ENCODE measurements at regions of chr5 and their contacts with region 1.

Region 1: DNA sequence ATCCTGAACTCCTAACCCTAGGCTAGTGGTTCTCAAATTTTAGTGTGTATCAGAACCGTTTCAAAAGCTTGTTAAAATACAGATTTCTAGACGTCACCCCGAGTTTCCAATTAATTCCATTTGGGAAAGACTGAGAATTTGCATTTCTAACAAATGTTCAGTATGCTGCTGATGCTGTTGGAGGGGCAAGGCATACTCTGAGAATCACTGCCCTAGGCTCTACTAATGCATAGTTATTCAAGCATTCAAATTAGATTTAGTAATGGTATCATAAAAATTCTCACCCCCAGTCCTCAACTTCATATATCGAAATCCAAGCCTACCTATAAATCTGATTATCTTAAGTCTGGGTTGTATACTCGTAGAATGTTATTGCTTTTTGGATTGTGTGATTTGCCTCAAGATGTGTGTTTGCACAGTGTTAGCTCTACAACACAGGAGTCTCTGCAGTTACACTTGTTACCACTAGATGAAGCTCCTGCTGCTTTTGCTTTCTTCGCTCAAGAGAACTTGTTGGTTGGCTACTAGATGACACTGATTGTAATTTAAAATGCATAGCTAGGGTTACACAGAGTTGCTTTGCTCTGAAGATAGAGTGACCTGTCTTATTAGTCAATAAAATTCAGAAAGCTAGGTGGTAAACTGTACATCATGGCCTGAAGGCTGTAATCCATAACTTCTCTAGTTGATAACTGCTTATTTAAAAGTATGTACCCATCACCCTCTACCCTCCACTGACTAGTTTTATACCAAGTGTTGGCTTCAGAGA is 7.5 kb upstream of the ERAP2 start:
- DNase-seq: no peak
- ATAC-seq: peak; percentile 86
- H3K4me3 ChIP-seq: no peak overlapping the region
- H3K27ac ChIP-seq: no peak overlapping the region
- H3K4me1 ChIP-seq: peaks cover 28% of the 10 kb centered on the region
- H3K27me3 ChIP-seq: no peaks in the 10 kb centered on the region
- CTCF ChIP-seq: peak; percentile 99 to 100 (median 100); a peak in 5 of 6 replicates
- EP300 ChIP-seq: no peak
- POLR2A ChIP-seq: no peak
- RAD21 ChIP-seq: peak; percentile 100

Region 2: DNA sequence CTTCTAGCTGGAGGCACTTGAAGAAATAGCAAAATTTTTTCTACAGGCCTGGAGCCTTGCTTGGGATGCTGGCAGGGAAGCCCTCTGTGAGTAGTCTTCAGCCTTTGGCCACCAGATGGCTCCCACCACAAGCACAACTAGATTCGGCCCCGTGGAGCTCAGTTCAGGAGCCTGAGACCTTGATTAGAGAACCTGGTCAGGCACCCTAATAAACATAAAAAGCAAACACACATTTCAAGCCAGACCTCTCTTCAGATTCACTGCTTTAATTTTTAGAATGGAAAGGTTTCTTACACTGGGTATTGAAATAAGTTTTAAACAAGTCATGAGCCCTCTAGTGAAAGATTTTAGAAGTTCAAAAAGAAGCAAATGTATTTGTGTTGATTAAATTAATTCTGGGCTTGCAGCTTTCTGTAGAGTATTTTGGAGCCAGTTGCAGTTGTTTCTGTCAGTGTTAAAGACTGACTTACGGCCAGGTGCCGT is 1087.6 kb before region 1 on chr5:
- CTCF ChIA-PET with region 1: no interaction called
- POLR2A ChIA-PET with region 1: no interaction called
- RAD21 ChIA-PET with region 1: no interaction called
- SMC1A ChIA-PET with region 1: no interaction called
- in situ Hi-C with region 1: no loop called
- intact Hi-C with region 1: no loop called
- DNase-seq: peak; percentile 51
- ATAC-seq: peak; percentile 100
- H3K4me3 ChIP-seq: no peak overlapping the region
- H3K27ac ChIP-seq: no peak overlapping the region
- H3K4me1 ChIP-seq: no peaks in the 10 kb centered on the region
- H3K27me3 ChIP-seq: no peaks in the 10 kb centered on the region
- CTCF ChIP-seq: peak; percentile 84 to 86 (median 86)
- EP300 ChIP-seq: no peak
- POLR2A ChIP-seq: no peak
- RAD21 ChIP-seq: peak; percentile 95

Region 3: GRCh38 chr5:96816411-96816939 is 52.3 kb before region 1 on chr5:
- CTCF ChIA-PET with region 1: interaction called, 14 read pairs
- POLR2A ChIA-PET with region 1: interaction called, 4 read pairs
- RAD21 ChIA-PET with region 1: interaction called, 5 read pairs
- SMC1A ChIA-PET with region 1: interaction called, 17 read pairs
- in situ Hi-C with region 1: no loop called
- intact Hi-C with region 1: no loop called
- DNase-seq: peak; percentile 90
- ATAC-seq: peak; percentile 89
- H3K4me3 ChIP-seq: peak overlapping the region; percentile 53
- H3K27ac ChIP-seq: peak overlapping the region; percentile 82
- H3K4me1 ChIP-seq: peaks cover 15% of the 10 kb centered on the region
- H3K27me3 ChIP-seq: no peaks in the 10 kb centered on the region
- CTCF ChIP-seq: no peak
- EP300 ChIP-seq: no peak
- POLR2A ChIP-seq: no peak
- RAD21 ChIP-seq: no peak

Region 4: GRCh38 chr5:96904054-96904931 is 35.5 kb after region 1 on chr5:
- CTCF ChIA-PET with region 1: interaction called, 167 read pairs
- POLR2A ChIA-PET with region 1: interaction called, 3 read pairs
- RAD21 ChIA-PET with region 1: interaction called, 134 read pairs
- SMC1A ChIA-PET with region 1: interaction called, 62 read pairs
- in situ Hi-C with region 1: no loop called
- intact Hi-C with region 1: loop called (anchors 1 kb)
- DNase-seq: no peak
- ATAC-seq: peak; percentile 34; the same call in 2 of the 3 replicates
- H3K4me3 ChIP-seq: no peak overlapping the region
- H3K27ac ChIP-seq: no peak overlapping the region
- H3K4me1 ChIP-seq: peaks cover 3% of the 10 kb centered on the region; the same call in 1 of the 2 replicates
- H3K27me3 ChIP-seq: no peaks in the 10 kb centered on the region
- CTCF ChIP-seq: no peak
- EP300 ChIP-seq: no peak
- POLR2A ChIP-seq: no peak
- RAD21 ChIP-seq: no peak

Region 5: GRCh38 chr5:96963267-96963666 is 94.5 kb after region 1 on chr5:
- CTCF ChIA-PET with region 1: interaction called, 25 read pairs
- POLR2A ChIA-PET with region 1: interaction called, 8 read pairs
- RAD21 ChIA-PET with region 1: interaction called, 136 read pairs
- SMC1A ChIA-PET with region 1: interaction called, 74 read pairs
- in situ Hi-C with region 1: no loop called
- intact Hi-C with region 1: no loop called
- DNase-seq: peak; percentile 33
- ATAC-seq: peak; percentile 74
- H3K4me3 ChIP-seq: peak overlapping the region; percentile 52; the same call in 1 of the 2 replicates
- H3K27ac ChIP-seq: peak overlapping the region; percentile 27
- H3K4me1 ChIP-seq: peaks cover 12% of the 10 kb centered on the region
- H3K27me3 ChIP-seq: no peaks in the 10 kb centered on the region
- CTCF ChIP-seq: no peak
- EP300 ChIP-seq: no peak
- POLR2A ChIP-seq: no peak
- RAD21 ChIP-seq: no peak

Region 6: GRCh38 chr5:96997265-96997859 is 128.6 kb after region 1 on chr5:
- CTCF ChIA-PET with region 1: interaction called, 109 read pairs
- POLR2A ChIA-PET with region 1: no interaction called
- RAD21 ChIA-PET with region 1: interaction called, 52 read pairs
- SMC1A ChIA-PET with region 1: interaction called, 104 read pairs
- in situ Hi-C with region 1: no loop called
- intact Hi-C with region 1: loop called (anchors 2 kb)
- DNase-seq: no peak
- ATAC-seq: peak; percentile 92
- H3K4me3 ChIP-seq: no peak overlapping the region
- H3K27ac ChIP-seq: no peak overlapping the region
- H3K4me1 ChIP-seq: no peaks in the 10 kb centered on the region
- H3K27me3 ChIP-seq: no peaks in the 10 kb centered on the region
- CTCF ChIP-seq: peak; percentile 24 to 40 (median 40); a peak in 4 of 6 replicates
- EP300 ChIP-seq: no peak
- POLR2A ChIP-seq: no peak
- RAD21 ChIP-seq: peak; percentile 47

Region 7: GRCh38 chr5:97044052-97044451 is 175.3 kb after region 1 on chr5:
- CTCF ChIA-PET with region 1: interaction called, 88 read pairs
- POLR2A ChIA-PET with region 1: no interaction called
- RAD21 ChIA-PET with region 1: interaction called, 15 read pairs
- SMC1A ChIA-PET with region 1: interaction called, 49 read pairs
- in situ Hi-C with region 1: no loop called
- intact Hi-C with region 1: no loop called
- DNase-seq: no peak
- ATAC-seq: peak; percentile 33
- H3K4me3 ChIP-seq: no peak overlapping the region
- H3K27ac ChIP-seq: no peak overlapping the region
- H3K4me1 ChIP-seq: no peaks in the 10 kb centered on the region
- H3K27me3 ChIP-seq: no peaks in the 10 kb centered on the region; a peak in 1 of 4 replicates
- CTCF ChIP-seq: peak in 2 of 3 experiments; percentile 18; a peak in 2 of 6 replicates
- EP300 ChIP-seq: no peak
- POLR2A ChIP-seq: no peak
- RAD21 ChIP-seq: peak; percentile 45

Region 8: GRCh38 chr5:97208714-97209113 is 339.9 kb after region 1 on chr5:
- CTCF ChIA-PET with region 1: no interaction called
- POLR2A ChIA-PET with region 1: no interaction called
- RAD21 ChIA-PET with region 1: no interaction called
- SMC1A ChIA-PET with region 1: no interaction called
- in situ Hi-C with region 1: no loop called
- intact Hi-C with region 1: no loop called
- DNase-seq: no peak
- ATAC-seq: no peak
- H3K4me3 ChIP-seq: no peak overlapping the region
- H3K27ac ChIP-seq: no peak overlapping the region
- H3K4me1 ChIP-seq: no peaks in the 10 kb centered on the region
- H3K27me3 ChIP-seq: no peaks in the 10 kb centered on the region
- CTCF ChIP-seq: no peak
- EP300 ChIP-seq: no peak
- POLR2A ChIP-seq: no peak
- RAD21 ChIP-seq: no peak

Measured in GM12878 (cell line).